Mammary epithelial cell (primary cell): ENCODE measurements at regions of chr9 and their contacts with region 1.

Region 1: GRCh38 chr9:98998441-98999151 is 54.9 kb downstream of the COL15A1 start:
- DNase-seq: peak; percentile 32
- H3K4me3 ChIP-seq: no peak overlapping the region
- H3K27ac ChIP-seq: no peak overlapping the region
- H3K4me1 ChIP-seq: no peaks in the 10 kb centered on the region
- H3K27me3 ChIP-seq: peaks cover 3% of the 10 kb centered on the region
- CTCF ChIP-seq: peak; percentile 83 to 93

Region 2: DNA sequence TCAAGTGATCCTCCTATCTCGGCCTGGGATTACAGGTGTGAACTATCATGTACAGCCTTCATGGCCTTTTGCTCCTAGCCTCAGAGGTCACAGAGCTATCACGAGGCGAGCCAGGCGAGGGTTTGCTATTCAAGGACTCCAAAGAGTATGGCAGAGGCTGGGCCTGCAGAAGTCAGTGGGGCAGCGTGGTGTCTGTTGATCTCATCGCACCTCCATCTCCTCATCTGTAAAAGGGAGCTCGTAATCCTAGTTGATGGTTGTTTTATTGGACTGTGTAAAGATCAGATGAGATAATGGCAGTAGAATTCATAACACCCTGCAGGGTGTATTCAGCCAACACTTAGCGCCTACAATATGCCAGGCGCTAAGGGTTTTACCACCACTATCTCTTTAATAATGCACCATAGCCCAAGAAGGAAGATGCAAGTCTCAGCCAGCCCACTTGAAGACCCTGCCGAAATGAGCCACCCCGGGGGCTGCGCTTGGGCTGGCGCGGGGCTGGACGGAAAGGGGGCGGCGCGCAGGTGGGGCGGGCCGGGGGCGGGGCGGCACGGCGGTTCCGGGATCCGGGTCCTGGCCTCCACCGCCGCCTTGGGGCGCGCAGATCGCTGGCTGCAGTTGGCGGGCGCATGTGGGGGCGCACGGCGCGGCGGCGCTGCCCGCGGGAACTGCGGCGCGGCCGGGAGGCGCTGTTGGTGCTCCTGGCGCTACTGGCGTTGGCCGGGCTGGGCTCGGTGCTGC is 191.4 kb before region 1 on chr9 and contains the start of gene GALNT12:
- CTCF ChIA-PET with region 1: interaction called, 9 read pairs
- dilution Hi-C with region 1: no loop called
- in situ Hi-C with region 1: no loop called
- intact Hi-C with region 1: loop called (anchors 1 kb)
- DNase-seq: no peak
- H3K4me3 ChIP-seq: peak within 1 kb of the TSS; percentile 39 to 50 (median 49)
- H3K27ac ChIP-seq: no peak within 1 kb of the TSS
- H3K4me1 ChIP-seq: peaks cover 43% of the 10 kb centered on the region
- H3K27me3 ChIP-seq: no peaks in the 10 kb centered on the region
- CTCF ChIP-seq: no peak
- total RNA-seq, gene GALNT12: 0.17 to 0.80 TPM

Region 3: GRCh38 chr9:98848450-98849149 is 150.0 kb before region 1 on chr9:
- CTCF ChIA-PET with region 1: no interaction called
- dilution Hi-C with region 1: loop called (anchors 5 kb)
- in situ Hi-C with region 1: loop called (anchors 5 kb)
- intact Hi-C with region 1: loop called (anchors 1 kb)
- DNase-seq: peak; percentile 97
- H3K4me3 ChIP-seq: peak overlapping the region in 2 of 3 experiments; percentile 7 to 10
- H3K27ac ChIP-seq: no peak overlapping the region
- H3K4me1 ChIP-seq: peaks cover 17% of the 10 kb centered on the region
- H3K27me3 ChIP-seq: no peaks in the 10 kb centered on the region
- CTCF ChIP-seq: peak; percentile 97

Region 4: GRCh38 chr9:98860871-98861293 is 137.7 kb before region 1 on chr9:
- CTCF ChIA-PET with region 1: no interaction called
- dilution Hi-C with region 1: no loop called
- in situ Hi-C with region 1: no loop called
- intact Hi-C with region 1: loop called (anchors 1 kb)
- DNase-seq: peak; percentile 25
- H3K4me3 ChIP-seq: no peak overlapping the region
- H3K27ac ChIP-seq: no peak overlapping the region
- H3K4me1 ChIP-seq: no peaks in the 10 kb centered on the region
- H3K27me3 ChIP-seq: no peaks in the 10 kb centered on the region
- CTCF ChIP-seq: peak in 1 of 2 donors; percentile 45

Region 5: GRCh38 chr9:98974994-98975712 is 23.4 kb before region 1 on chr9:
- CTCF ChIA-PET with region 1: no interaction called
- dilution Hi-C with region 1: no loop called
- in situ Hi-C with region 1: no loop called
- intact Hi-C with region 1: loop called (anchors 1 kb)
- DNase-seq: peak; percentile 66
- H3K4me3 ChIP-seq: peak overlapping the region in 1 of 3 experiments; percentile 10
- H3K27ac ChIP-seq: no peak overlapping the region
- H3K4me1 ChIP-seq: peaks cover 10% of the 10 kb centered on the region
- H3K27me3 ChIP-seq: no peaks in the 10 kb centered on the region
- CTCF ChIP-seq: peak; percentile 96 to 99

Region 6: GRCh38 chr9:99130069-99130468 is 131.5 kb after region 1 on chr9:
- CTCF ChIA-PET with region 1: no interaction called
- dilution Hi-C with region 1: no loop called
- in situ Hi-C with region 1: loop called (anchors 10 kb)
- intact Hi-C with region 1: no loop called
- DNase-seq: no peak
- H3K4me3 ChIP-seq: no peak overlapping the region
- H3K27ac ChIP-seq: no peak overlapping the region
- H3K4me1 ChIP-seq: peaks cover 58% of the 10 kb centered on the region
- H3K27me3 ChIP-seq: no peaks in the 10 kb centered on the region
- CTCF ChIP-seq: no peak

Region 7: DNA sequence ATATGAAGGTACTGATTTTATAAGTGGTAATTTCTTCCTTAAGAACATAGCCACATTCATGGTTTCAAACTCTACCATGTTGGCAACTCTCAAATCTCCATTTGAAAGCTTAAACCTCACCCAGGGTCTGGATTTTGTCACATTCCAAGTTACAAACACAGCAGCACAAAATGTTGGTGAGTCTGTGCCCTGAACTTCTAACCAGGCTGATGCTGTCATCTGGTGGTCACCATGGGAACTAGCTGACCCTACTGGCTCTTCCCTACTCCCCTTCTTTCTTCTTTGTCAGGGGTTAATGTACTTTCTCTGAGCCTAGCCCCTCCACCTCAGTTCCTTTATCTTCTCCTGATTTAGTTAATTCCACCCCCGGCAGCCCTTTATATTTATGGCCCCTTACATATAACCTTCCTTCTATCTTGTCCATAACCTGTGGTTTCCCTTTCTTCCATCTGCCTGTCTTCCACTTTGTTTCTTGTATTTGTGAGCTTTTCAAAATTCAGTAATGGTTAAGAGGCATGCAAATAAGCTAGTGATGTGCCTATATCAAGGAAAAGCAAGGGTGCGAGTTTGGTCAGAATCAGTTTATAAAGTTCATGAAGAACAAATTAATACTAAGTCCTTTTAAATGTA is 142.2 kb after region 1 on chr9:
- CTCF ChIA-PET with region 1: no interaction called
- dilution Hi-C with region 1: no loop called
- in situ Hi-C with region 1: loop called (anchors 10 kb)
- intact Hi-C with region 1: loop called (anchors 1 kb)
- DNase-seq: peak; percentile 16
- H3K4me3 ChIP-seq: no peak overlapping the region
- H3K27ac ChIP-seq: no peak overlapping the region
- H3K4me1 ChIP-seq: no peaks in the 10 kb centered on the region
- H3K27me3 ChIP-seq: no peaks in the 10 kb centered on the region
- CTCF ChIP-seq: peak; percentile 92 to 95